ENCODE measurements at regions of chr5 and their contacts with region 1.

Region 1: DNA sequence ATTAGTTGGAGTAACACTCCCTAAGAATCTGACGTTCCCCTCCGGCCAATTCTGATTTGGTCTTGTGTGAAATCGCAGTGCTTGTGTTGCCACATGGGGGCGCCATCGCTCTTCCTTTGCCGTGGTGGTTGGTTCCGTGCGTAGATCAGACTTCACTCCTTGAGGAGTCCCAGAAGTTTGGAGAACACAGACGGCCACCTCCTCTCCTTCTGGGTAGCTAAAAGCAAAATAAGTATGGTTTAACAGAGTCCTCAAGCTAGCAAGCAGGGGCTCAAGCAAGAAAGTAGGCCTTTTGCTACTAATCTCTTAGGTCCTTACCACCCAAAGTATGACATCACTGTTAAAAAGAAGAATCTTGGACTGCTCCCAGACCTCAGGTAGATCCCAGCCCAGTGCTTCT is 59.5 kb downstream of the HSPA4 start:
- DNase-seq: peak; percentile 84

Region 2: GRCh38 chr5:133086366-133086875 is 24.9 kb before region 1 on chr5:
- CTCF ChIA-PET with region 1: no interaction called
- POLR2A ChIA-PET with region 1: no interaction called
- DNase-seq: no peak

Region 3: GRCh38 chr5:133247881-133248624 is 136.8 kb after region 1 on chr5:
- CTCF ChIA-PET with region 1: interaction called, 53 read pairs
- POLR2A ChIA-PET with region 1: no interaction called
- DNase-seq: peak; percentile 32

Region 4: GRCh38 chr5:133287500-133287899 is 176.2 kb after region 1 on chr5:
- CTCF ChIA-PET with region 1: interaction called, 39 read pairs
- POLR2A ChIA-PET with region 1: interaction called, 4 read pairs
- DNase-seq: peak; percentile 57

Measured in HEK293T (cell line).